ENCODE measurements at regions of chr6 and their contacts with region 1.

Region 1: GRCh38 chr6:122839477-122839876 is 50.4 kb downstream of the SMPDL3A start:
- DNase-seq: peak; percentile 62
- H3K4me3 ChIP-seq: no peak overlapping the region
- H3K27ac ChIP-seq: no peak overlapping the region
- H3K4me1 ChIP-seq: peaks cover 0 to 4% of the 10 kb centered on the region in 2 experiments; a peak in 1 of 4 replicates
- H3K27me3 ChIP-seq: peaks cover 23% of the 10 kb centered on the region
- CTCF ChIP-seq: peak; percentile 67
- EP300 ChIP-seq: no peak
- RAD21 ChIP-seq: peak; percentile 62

Region 2: GRCh38 chr6:122789182-122790027 is 50.1 kb before region 1 on chr6 and contains the start of gene SMPDL3A:
- CTCF ChIA-PET with region 1: interaction called, 12 read pairs
- POLR2A ChIA-PET with region 1: no interaction called
- DNase-seq: peak; percentile 69
- H3K4me3 ChIP-seq: peak within 1 kb of the TSS; percentile 65 to 82
- H3K27ac ChIP-seq: peak within 1 kb of the TSS in 1 of 2 experiments; percentile 19; a peak in 2 of 4 replicates
- H3K4me1 ChIP-seq: peaks cover 0 to 9% of the 10 kb centered on the region in 2 experiments; a peak in 1 of 4 replicates
- H3K27me3 ChIP-seq: peaks cover 30% of the 10 kb centered on the region
- CTCF ChIP-seq: peak; percentile 69
- EP300 ChIP-seq: peak in 1 of 2 experiments; percentile 30; a peak in 1 of 4 replicates
- RAD21 ChIP-seq: no peak
- polyA plus RNA-seq, gene SMPDL3A: 1.8 and 2.0 TPM in 2 replicates

Measured in SK-N-SH (cell line).